Naive thymus-derived CD4-positive, alpha-beta T cell (primary cell): ENCODE measurements at regions of chr17 and their contacts with region 1.

Region 1: GRCh38 chr17:75319904-75320691 is 30.9 kb upstream of the SLC25A19 start:
- DNase-seq: no peak
- ATAC-seq: no peak
- H3K4me3 ChIP-seq: no peak overlapping the region
- H3K4me3 Mint-ChIP-seq: no peak overlapping the region
- H3K27ac ChIP-seq: no peak overlapping the region
- H3K27ac Mint-ChIP-seq: peak overlapping the region in 3 of 9 donors; percentile 13 to 51 (median 48)
- H3K4me1 ChIP-seq: peaks cover 4% of the 10 kb centered on the region in 2 donors
- H3K4me1 Mint-ChIP-seq: peaks cover 0 to 20% (median 9%) of the 10 kb centered on the region in 7 donors
- H3K27me3 ChIP-seq: no peaks in the 10 kb centered on the region
- H3K27me3 Mint-ChIP-seq: no peaks in the 10 kb centered on the region

Region 2: DNA sequence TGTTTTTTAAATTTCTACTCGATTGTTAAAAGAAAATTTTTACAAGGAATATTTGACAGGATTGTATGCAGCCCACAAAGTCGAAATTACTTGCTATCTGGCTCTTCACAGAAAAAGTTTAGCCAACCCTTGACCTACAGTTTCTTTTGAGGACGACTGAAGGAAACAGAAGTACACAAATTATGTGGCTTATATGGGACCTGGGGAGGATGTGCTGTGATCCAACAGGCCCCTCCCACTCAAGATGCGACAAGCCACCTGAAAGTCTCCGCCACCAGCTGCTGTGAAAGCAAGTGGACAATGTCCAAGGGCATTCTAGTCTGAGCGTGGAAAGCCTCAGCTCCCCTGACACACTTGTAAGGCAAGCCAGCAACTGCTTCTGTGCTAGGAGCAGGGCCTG is 11.6 kb after region 1 on chr17:
- CTCF ChIA-PET with region 1: interaction called, 4 read pairs
- POLR2A ChIA-PET with region 1: interaction called, 4 read pairs
- intact Hi-C with region 1: loop called in 1 of 2 experiments (anchors 1 kb)
- DNase-seq: no peak
- ATAC-seq: no peak
- H3K4me3 ChIP-seq: no peak overlapping the region
- H3K4me3 Mint-ChIP-seq: peak overlapping the region in 5 of 10 donors; percentile 2 to 66 (median 35)
- H3K27ac ChIP-seq: peak overlapping the region; percentile 15
- H3K27ac Mint-ChIP-seq: peak overlapping the region in 8 of 9 donors; percentile 4 to 75 (median 33)
- H3K4me1 ChIP-seq: peaks cover 4 to 41% of the 10 kb centered on the region in 2 donors
- H3K4me1 Mint-ChIP-seq: peaks cover 32 to 81% (median 73%) of the 10 kb centered on the region in 7 donors
- H3K27me3 ChIP-seq: no peaks in the 10 kb centered on the region
- H3K27me3 Mint-ChIP-seq: no peaks in the 10 kb centered on the region

Region 3: GRCh38 chr17:75338335-75338734 is 18.2 kb after region 1 on chr17:
- CTCF ChIA-PET with region 1: interaction called, 3 read pairs
- POLR2A ChIA-PET with region 1: interaction called, 4 read pairs
- intact Hi-C with region 1: loop called in 1 of 2 experiments (anchors 1 kb)
- DNase-seq: peak in 6 of 9 donors; percentile 30 to 55 (median 47)
- ATAC-seq: peak; percentile 63
- H3K4me3 ChIP-seq: peak overlapping the region; percentile 4
- H3K4me3 Mint-ChIP-seq: peak overlapping the region; percentile 63 to 84 (median 78)
- H3K27ac ChIP-seq: peak overlapping the region; percentile 58
- H3K27ac Mint-ChIP-seq: peak overlapping the region; percentile 23 to 97 (median 86)
- H3K4me1 ChIP-seq: peaks cover 33 to 76% of the 10 kb centered on the region in 2 donors
- H3K4me1 Mint-ChIP-seq: peaks cover 58 to 92% (median 79%) of the 10 kb centered on the region in 7 donors
- H3K27me3 ChIP-seq: no peaks in the 10 kb centered on the region
- H3K27me3 Mint-ChIP-seq: no peaks in the 10 kb centered on the region

Region 4: DNA sequence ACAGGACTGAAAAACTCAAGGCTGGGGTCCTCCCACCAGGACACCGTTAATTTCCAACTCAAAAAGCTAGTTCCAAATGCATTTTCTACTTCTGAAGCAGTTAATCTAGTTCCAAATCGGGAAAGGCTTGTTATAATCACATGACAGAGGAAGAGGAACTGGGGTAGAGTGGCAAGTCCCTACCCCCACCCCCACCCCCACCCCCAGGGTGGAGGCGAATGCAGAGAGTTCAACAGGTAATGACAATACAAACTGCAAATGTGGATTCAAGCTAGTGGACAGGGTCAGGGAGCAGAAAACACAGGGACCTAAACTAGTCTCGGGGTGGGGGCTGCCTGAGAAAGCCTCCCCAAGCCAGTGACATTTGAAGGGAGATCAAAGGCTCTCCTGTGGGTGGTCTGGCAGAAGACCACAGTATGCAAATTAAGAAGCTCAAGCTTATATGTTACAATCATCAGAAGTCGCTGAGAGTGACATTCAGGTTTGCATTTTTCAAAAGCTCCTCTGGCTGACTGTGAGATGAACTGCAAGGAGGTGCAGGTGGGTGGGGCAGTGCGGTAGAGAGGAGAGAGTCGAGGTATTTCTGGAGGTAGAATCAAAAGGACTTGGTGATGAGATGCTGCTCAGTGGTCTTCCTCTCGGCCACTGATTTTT is 25.5 kb after region 1 on chr17:
- CTCF ChIA-PET with region 1: interaction called, 8 read pairs
- POLR2A ChIA-PET with region 1: interaction called, 4 read pairs
- intact Hi-C with region 1: loop called in 1 of 2 experiments (anchors 1 kb)
- DNase-seq: peak in 8 of 9 donors; percentile 36 to 65 (median 53)
- ATAC-seq: peak; percentile 82
- H3K4me3 ChIP-seq: peak overlapping the region; percentile 43
- H3K4me3 Mint-ChIP-seq: peak overlapping the region; percentile 65 to 91 (median 81)
- H3K27ac ChIP-seq: peak overlapping the region; percentile 65
- H3K27ac Mint-ChIP-seq: peak overlapping the region; percentile 76 to 98 (median 93)
- H3K4me1 ChIP-seq: peaks cover 61 to 85% of the 10 kb centered on the region in 2 donors
- H3K4me1 Mint-ChIP-seq: peaks cover 60 to 100% (median 91%) of the 10 kb centered on the region in 7 donors
- H3K27me3 ChIP-seq: no peaks in the 10 kb centered on the region
- H3K27me3 Mint-ChIP-seq: no peaks in the 10 kb centered on the region

Region 5: DNA sequence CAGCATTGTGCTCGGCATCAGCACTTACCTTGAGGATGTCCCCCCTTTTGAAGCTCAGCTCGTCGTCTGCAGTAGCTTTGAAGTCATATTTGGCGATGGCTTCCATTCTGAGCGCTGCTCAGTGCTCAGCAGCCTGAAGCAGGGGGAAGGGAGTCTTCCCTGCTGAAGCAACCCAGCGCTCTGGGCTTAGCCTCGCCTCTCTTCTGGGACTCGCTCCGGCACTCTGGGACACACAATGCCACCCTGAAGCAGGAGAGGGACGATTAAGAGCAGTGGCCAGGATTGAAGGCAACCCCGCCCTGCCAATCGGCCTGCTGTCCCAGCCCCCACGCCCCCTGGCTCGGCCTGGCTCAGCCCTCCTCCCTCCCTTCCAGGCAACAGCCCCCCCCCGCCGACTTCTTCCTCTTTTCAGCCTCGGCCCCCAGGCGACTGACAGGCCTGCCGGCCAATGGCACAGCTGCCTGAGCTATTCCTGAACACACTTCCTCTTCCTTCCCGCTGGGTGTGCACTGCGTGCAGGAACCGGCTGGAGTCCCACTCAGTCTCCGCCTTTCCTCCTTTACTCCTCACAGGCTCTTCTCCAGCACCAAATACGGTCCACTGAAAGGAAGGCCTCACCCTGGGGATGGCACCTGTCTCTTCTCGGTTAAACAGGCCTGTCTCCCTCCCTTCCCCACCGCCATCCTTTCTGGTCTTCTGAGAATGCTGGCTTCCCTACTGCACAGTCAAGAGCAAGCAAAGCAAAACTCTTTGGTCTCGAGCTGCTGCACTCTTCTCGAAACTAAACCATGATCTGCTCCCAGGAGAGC is 73.6 kb after region 1 on chr17:
- CTCF ChIA-PET with region 1: interaction called, 7 read pairs
- POLR2A ChIA-PET with region 1: interaction called, 10 read pairs
- intact Hi-C with region 1: no loop called
- DNase-seq: peak; percentile 50 to 79 (median 55)
- ATAC-seq: peak; percentile 95
- H3K4me3 ChIP-seq: peak overlapping the region; percentile 55
- H3K4me3 Mint-ChIP-seq: peak overlapping the region; percentile 87 to 98 (median 93)
- H3K27ac ChIP-seq: peak overlapping the region; percentile 48
- H3K27ac Mint-ChIP-seq: peak overlapping the region; percentile 45 to 93 (median 83)
- H3K4me1 ChIP-seq: peaks cover 11 to 49% of the 10 kb centered on the region in 2 donors
- H3K4me1 Mint-ChIP-seq: peaks cover 70 to 95% (median 85%) of the 10 kb centered on the region in 7 donors
- H3K27me3 ChIP-seq: no peaks in the 10 kb centered on the region
- H3K27me3 Mint-ChIP-seq: no peaks in the 10 kb centered on the region

Region 6: GRCh38 chr17:75412455-75413317 is 92.6 kb after region 1 on chr17:
- CTCF ChIA-PET with region 1: interaction called, 20 read pairs
- POLR2A ChIA-PET with region 1: interaction called, 4 read pairs
- intact Hi-C with region 1: loop called (anchors 1 kb)
- DNase-seq: peak; percentile 52 to 82 (median 73)
- ATAC-seq: peak; percentile 88
- H3K4me3 ChIP-seq: peak overlapping the region; percentile 25
- H3K4me3 Mint-ChIP-seq: peak overlapping the region; percentile 23 to 75 (median 60)
- H3K27ac ChIP-seq: peak overlapping the region; percentile 19
- H3K27ac Mint-ChIP-seq: peak overlapping the region in 6 of 9 donors; percentile 15 to 87 (median 45)
- H3K4me1 ChIP-seq: peaks cover 3 to 13% of the 10 kb centered on the region in 2 donors
- H3K4me1 Mint-ChIP-seq: peaks cover 14 to 26% (median 23%) of the 10 kb centered on the region in 7 donors
- H3K27me3 ChIP-seq: no peaks in the 10 kb centered on the region
- H3K27me3 Mint-ChIP-seq: peaks cover 0 to 27% (median 0%) of the 10 kb centered on the region in 5 donors